Endothelial cell of umbilical vein (primary cell): ENCODE measurements at regions of chr3 and their contacts with region 1.

Region 1: DNA sequence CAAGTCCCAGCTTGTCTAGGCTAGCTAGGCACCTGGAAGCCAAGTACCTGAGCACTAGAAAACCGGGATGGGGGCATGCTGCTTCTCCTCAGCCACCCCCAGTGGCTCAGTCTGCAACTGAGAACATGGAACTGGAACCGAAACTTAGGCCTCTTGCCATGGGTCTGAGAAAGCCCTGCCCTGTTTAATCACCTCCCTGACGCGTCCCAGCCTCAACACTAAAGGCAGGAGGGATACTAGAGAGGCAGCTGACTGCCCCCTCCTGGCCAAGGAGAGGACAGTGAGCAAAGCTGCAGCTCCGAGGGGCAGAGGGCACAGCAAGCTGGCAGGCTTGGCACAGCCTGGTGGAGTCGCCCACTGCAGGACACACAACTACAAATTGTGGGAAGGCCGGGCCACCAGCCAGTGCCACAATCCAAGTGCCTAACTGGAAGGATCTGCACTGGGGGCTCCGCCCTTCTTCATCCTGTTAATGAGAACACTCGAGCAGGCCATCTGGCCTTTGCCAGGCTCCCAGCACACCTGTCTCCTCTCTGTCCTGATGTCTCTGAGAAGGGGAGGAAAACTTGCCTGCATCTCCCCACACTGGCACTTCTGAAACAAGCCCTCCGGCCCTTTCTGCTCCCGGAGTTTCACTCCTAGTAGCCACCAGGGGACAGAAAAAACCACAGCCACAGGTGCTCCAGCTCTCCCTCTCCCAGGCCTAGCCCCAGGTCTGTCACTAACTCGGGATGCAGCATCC is 53.7 kb downstream of the BDH1 start:
- DNase-seq: peak; percentile 64
- H3K4me3 ChIP-seq: no peak overlapping the region
- H3K27ac ChIP-seq: no peak overlapping the region
- H3K4me1 ChIP-seq: no peaks in the 10 kb centered on the region
- H3K27me3 ChIP-seq: no peaks in the 10 kb centered on the region
- CTCF ChIP-seq: peak; percentile 74 to 78
- POLR2A ChIP-seq: no peak

Region 2: DNA sequence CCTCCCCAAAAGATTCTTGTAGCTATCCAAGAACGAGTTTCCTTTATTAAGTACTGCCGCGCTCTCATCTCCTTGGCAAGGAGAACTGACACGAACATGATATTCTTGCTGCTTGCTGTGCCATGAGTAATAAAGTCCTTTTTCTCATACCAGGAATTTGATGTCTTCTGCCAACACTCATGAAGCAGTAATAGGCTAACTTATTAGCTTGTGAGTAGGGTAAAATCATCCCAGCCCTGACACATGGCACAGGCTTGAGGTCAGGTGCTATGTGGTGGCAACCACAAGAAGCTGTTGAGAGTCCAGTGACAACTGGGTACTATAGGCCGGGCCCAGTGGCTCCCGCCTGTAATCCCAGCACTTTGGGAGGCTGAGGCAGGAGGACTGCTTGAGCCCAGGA is 1047.1 kb before region 1 on chr3:
- CTCF ChIA-PET with region 1: no interaction called
- POLR2A ChIA-PET with region 1: no interaction called
- dilution Hi-C with region 1: no loop called
- intact Hi-C with region 1: no loop called
- DNase-seq: no peak
- H3K4me3 ChIP-seq: no peak overlapping the region
- H3K27ac ChIP-seq: no peak overlapping the region
- H3K4me1 ChIP-seq: no peaks in the 10 kb centered on the region
- H3K27me3 ChIP-seq: no peaks in the 10 kb centered on the region
- CTCF ChIP-seq: no peak
- POLR2A ChIP-seq: no peak

Region 3: DNA sequence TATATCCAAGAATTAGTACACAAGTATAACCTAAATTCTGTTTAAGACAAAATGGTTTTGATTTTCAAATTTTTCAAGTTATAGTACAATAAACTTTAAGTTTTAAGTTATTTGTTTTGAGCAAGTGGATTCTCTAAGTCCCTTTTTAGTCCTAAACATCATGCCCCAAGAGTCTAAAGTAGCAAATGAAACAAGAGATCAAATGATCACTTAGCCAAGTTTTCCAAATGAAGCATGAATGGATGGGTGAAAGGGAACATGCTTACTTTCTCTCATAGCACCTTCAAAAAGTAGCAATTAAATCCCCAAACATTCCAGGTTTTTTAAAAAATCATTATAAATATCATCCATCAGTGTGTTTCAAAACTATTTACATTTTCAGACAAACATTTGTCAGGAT is 223.1 kb before region 1 on chr3:
- CTCF ChIA-PET with region 1: interaction called, 23 read pairs
- POLR2A ChIA-PET with region 1: no interaction called
- dilution Hi-C with region 1: loop called (anchors 25 kb)
- intact Hi-C with region 1: no loop called
- DNase-seq: no peak
- H3K4me3 ChIP-seq: no peak overlapping the region
- H3K27ac ChIP-seq: no peak overlapping the region
- H3K4me1 ChIP-seq: no peaks in the 10 kb centered on the region
- H3K27me3 ChIP-seq: no peaks in the 10 kb centered on the region
- CTCF ChIP-seq: no peak
- POLR2A ChIP-seq: no peak

Region 4: DNA sequence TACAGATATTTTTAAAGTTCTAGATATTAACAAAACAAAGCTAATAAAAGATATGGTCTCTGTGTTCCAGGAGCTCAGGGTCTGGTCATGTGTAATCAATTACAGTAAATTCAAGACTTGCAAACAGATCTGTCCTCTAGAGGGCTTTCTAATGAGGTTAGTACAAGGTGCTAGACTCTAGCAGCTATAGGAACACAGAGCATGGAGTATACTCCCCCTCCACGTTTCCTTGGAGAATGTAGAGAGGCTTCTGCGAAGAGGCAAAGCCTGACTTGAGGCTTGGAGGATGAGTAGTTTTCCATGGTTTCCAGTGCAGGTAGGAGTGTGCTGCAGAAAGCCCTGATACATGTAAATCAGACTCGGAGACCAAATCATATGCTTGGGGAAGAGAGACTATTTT is 170.9 kb before region 1 on chr3:
- CTCF ChIA-PET with region 1: interaction called, 14 read pairs
- POLR2A ChIA-PET with region 1: no interaction called
- dilution Hi-C with region 1: no loop called
- intact Hi-C with region 1: no loop called
- DNase-seq: no peak
- H3K4me3 ChIP-seq: no peak overlapping the region
- H3K27ac ChIP-seq: no peak overlapping the region
- H3K4me1 ChIP-seq: no peaks in the 10 kb centered on the region
- H3K27me3 ChIP-seq: peaks cover 2% of the 10 kb centered on the region in 2 experiments
- CTCF ChIP-seq: peak in 1 of 2 donors; percentile 1
- POLR2A ChIP-seq: no peak

Region 5: DNA sequence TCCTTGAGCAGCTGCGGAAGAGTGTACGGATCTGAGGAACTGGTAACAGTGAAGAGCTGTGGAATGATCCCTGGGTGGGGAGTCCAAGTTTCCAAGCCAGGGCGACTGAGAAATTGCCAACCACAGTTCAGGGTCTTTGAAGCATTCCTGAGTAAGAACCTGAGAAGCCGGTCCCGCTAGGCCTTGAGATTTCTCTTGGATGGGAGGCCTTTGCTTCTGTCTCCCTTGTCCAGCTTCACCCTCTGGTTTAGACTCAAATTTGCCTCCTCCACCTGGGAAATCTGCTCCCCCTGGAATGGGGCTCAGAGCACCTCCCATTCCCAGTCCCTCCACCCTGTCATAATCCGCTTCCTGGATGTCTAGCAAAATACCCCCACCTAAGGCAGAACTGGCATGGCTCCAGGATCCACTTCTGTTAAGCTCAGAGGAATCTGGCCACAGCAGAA is 75.9 kb before region 1 on chr3:
- CTCF ChIA-PET with region 1: interaction called, 10 read pairs
- POLR2A ChIA-PET with region 1: no interaction called
- dilution Hi-C with region 1: no loop called
- intact Hi-C with region 1: no loop called
- DNase-seq: no peak
- H3K4me3 ChIP-seq: no peak overlapping the region
- H3K27ac ChIP-seq: no peak overlapping the region
- H3K4me1 ChIP-seq: peaks cover 11% of the 10 kb centered on the region
- H3K27me3 ChIP-seq: no peaks in the 10 kb centered on the region
- CTCF ChIP-seq: no peak
- POLR2A ChIP-seq: no peak

Region 6: GRCh38 chr3:197487908-197488391 is 14.1 kb before region 1 on chr3:
- CTCF ChIA-PET with region 1: interaction called, 17 read pairs
- POLR2A ChIA-PET with region 1: no interaction called
- dilution Hi-C with region 1: no loop called
- intact Hi-C with region 1: no loop called
- DNase-seq: peak; percentile 98
- H3K4me3 ChIP-seq: no peak overlapping the region
- H3K27ac ChIP-seq: peak overlapping the region; percentile 87
- H3K4me1 ChIP-seq: peaks cover 46% of the 10 kb centered on the region
- H3K27me3 ChIP-seq: no peaks in the 10 kb centered on the region
- CTCF ChIP-seq: no peak
- POLR2A ChIP-seq: no peak